Dorsolateral prefrontal cortex (tissue), 120 donors: ENCODE measurements at regions of chr6 and their contacts with region 1.

Region 1: GRCh38 chr6:26553635-26554446 is 15.7 kb downstream of the HMGN4 start:
- DNase-seq: peak in 9 of 10 donors; percentile 37 to 83 (median 64)
- H3K4me3 ChIP-seq: peak overlapping the region; percentile 48 to 82 (median 66)
- H3K27ac ChIP-seq: peak overlapping the region; percentile 0 to 97 (median 83)
- H3K27me3 ChIP-seq: no peaks in the 10 kb centered on the region
- CTCF ChIP-seq: peak in 2 of 56 donors; percentile 0 to 6

Region 2: DNA sequence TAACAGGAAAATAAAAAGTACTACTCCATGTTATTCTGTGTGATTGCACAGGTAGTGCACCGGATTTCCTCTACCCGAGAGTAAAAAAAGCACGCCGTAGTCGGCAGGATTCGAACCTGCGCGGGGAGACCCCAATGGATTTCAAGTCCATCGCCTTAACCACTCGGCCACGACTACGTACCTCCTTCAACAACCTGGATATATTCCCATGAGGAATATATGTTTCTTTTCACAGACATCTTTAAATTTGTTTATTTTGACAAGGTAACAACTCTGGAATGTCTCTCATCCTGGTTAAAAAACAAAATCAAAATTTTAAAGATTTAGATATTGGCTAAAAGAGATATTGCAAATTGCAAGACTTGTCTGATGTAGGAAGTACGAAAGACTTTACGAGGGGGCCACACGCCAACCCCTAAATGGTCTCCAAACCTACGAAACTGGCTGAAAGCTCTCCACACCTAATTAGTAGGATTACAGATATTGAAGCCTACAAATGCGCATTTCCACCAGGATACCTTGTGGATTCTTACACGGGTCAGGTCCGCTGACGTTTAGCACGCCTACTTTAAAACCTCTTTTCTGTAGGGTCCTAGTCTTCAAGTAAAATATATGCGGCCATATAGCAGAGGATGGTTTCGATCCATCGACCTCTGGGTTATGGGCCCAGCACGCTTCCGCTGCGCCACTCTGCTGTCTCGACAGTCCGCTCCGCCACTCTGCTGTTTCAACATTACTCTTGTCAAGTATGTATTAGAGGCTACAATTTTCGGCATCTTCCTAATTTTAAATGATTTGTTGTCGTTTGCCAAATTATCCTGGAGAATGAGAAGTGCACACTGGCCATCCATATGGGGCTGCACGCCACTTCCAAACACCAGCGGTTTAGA is 241.1 kb before region 1 on chr6:
- intact Hi-C with region 1: loop called in 1 of 2 experiments (anchors 5 kb)
- DNase-seq: peak; percentile 57 to 86 (median 78)
- H3K4me3 ChIP-seq: peak overlapping the region; percentile 38 to 73 (median 60)
- H3K27ac ChIP-seq: peak overlapping the region in 54 of 59 donors; percentile 15 to 83 (median 68)
- H3K27me3 ChIP-seq: peaks cover 0 to 8% (median 0%) of the 10 kb centered on the region in 45 donors
- CTCF ChIP-seq: peak in 5 of 56 donors; percentile 6 to 24 (median 22)

Region 3: DNA sequence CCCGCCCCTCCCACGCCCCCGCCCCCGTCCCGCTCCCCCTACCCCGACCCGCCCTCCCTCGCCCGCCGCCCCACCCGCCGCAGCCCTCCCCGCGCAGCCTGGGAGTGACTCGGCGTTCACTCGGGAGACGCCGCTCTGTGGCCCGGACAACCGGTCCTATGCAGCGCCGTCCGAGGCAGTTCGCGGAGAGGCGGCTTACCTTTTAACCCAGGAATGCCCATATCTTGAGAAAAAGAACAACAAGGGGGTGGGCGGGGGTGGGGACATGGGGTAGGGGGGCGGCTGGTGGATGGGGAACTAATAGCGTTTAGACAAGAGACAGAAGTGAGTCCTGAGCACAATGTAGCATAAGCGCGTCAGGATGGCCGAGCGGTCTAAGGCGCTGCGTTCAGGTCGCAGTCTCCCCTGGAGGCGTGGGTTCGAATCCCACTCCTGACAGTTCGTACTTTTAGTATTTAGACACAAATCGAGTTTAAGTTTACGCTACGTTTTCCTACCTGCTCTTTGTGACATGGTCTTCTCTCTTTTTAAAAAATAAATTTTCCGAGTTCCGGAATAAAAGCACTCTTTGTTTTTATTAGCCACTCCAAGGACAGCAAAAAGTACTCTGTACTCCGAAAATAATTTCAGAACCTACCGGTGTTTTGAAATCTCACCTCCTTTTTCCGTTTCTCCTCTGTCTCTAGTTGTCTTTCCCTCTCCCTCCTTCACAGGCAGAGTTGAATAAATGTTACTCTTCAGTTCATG is 32.8 kb before region 1 on chr6:
- intact Hi-C with region 1: loop called in 1 of 2 experiments (anchors 5 kb)
- DNase-seq: peak; percentile 64 to 83 (median 80)
- H3K4me3 ChIP-seq: peak overlapping the region; percentile 45 to 78 (median 68)
- H3K27ac ChIP-seq: peak overlapping the region; percentile 58 to 96 (median 90)
- H3K27me3 ChIP-seq: no peaks in the 10 kb centered on the region
- CTCF ChIP-seq: peak in 4 of 56 donors; percentile 0 to 6 (median 5)

Region 4: GRCh38 chr6:26568601-26569432 is 15.0 kb after region 1 on chr6:
- intact Hi-C with region 1: loop called (anchors 1 to 2 kb)
- DNase-seq: peak; percentile 89 to 97 (median 94)
- H3K4me3 ChIP-seq: peak overlapping the region; percentile 42 to 87 (median 68)
- H3K27ac ChIP-seq: peak overlapping the region; percentile 52 to 97 (median 90)
- H3K27me3 ChIP-seq: no peaks in the 10 kb centered on the region
- CTCF ChIP-seq: peak in 13 of 56 donors; percentile 6 to 29 (median 13)

Region 5: DNA sequence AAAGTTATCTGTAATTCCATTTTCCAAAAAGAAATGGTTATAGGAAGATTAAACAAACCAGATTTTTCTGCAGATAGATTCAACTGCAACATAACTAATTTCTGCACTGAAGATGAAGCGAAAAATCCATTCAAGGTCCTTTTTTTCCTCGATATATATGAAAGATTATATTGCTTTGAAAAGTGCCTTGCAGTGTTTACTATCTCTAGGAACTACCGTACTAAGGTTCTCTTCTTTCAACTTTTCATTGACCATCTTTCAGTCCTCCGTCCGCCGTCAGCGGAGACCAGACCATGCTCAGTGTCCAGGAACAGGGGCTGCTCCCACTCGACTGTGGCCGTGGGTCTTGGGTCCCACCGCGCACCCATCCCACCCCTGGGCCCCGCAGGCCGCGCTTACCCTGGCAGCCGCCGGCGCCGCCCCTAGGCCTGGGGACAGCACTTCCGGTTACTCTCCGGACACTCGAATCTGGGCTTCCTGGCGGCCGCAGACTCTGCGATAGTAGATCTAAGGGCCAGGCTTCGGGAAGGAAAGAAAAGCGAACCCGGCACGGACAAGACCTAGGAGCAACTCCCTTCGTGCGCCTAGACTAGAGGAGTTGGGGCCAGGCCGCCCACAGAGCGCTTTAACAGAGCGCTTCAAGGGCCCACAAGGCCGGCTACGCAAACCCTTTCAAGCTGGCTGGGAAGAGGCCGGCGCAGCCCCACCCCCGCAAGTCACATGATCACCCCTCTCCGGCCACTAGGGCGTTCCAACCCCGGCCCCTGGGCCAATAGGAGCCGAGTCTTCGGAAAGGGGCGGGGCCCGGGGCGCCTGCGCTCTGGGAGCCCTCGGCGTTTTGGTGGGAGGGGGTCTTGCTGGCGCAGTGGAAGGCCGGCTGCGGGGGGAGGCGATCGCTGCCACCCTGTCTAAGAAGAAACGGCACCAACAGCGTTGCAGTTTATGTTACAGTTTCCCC is 105.5 kb after region 1 on chr6 and contains the start of gene ZNF322:
- intact Hi-C with region 1: no loop called
- DNase-seq: peak; percentile 91 to 97 (median 96)
- H3K4me3 ChIP-seq: peak within 1 kb of the TSS; percentile 52 to 95 (median 85)
- H3K27ac ChIP-seq: peak within 1 kb of the TSS in 58 of 59 donors; percentile 4 to 95 (median 86)
- H3K27me3 ChIP-seq: peaks cover 0 to 10% (median 0%) of the 10 kb centered on the region in 45 donors
- CTCF ChIP-seq: peak in 15 of 56 donors; percentile 4 to 36 (median 21)
- total RNA-seq, gene ZNF322: 20.5 to 42.8 (median 31.9) TPM